WTC11 (cell line): ENCODE measurements at regions of chr10 and their contacts with region 1.

Region 1: GRCh38 chr10:72834183-72834825 is 59.2 kb upstream of the OIT3 start:
- DNase-seq: peak; percentile 19
- ATAC-seq: peak; percentile 59; the same call in 1 of the 2 replicates
- H3K4me3 Mint-ChIP-seq: no peak overlapping the region
- H3K27ac Mint-ChIP-seq: no peak overlapping the region
- H3K4me1 Mint-ChIP-seq: peaks cover 25% of the 10 kb centered on the region
- H3K27me3 Mint-ChIP-seq: no peaks in the 10 kb centered on the region
- CTCF ChIP-seq: no peak

Region 2: GRCh38 chr10:72364239-72364777 is 470.0 kb before region 1 on chr10:
- CTCF ChIA-PET with region 1: interaction called, 38 read pairs
- POLR2A ChIA-PET with region 1: no interaction called
- DNase-seq: peak; percentile 91
- ATAC-seq: peak; percentile 99
- H3K4me3 Mint-ChIP-seq: no peak overlapping the region
- H3K27ac Mint-ChIP-seq: peak overlapping the region; percentile 80; the same call in 1 of the 2 replicates
- H3K4me1 Mint-ChIP-seq: no peaks in the 10 kb centered on the region
- H3K27me3 Mint-ChIP-seq: no peaks in the 10 kb centered on the region; the same call in 1 of the 2 replicates
- CTCF ChIP-seq: peak; percentile 75

Region 3: GRCh38 chr10:72375585-72375984 is 458.7 kb before region 1 on chr10:
- CTCF ChIA-PET with region 1: interaction called, 26 read pairs
- POLR2A ChIA-PET with region 1: no interaction called
- DNase-seq: peak; percentile 50
- ATAC-seq: peak; percentile 87
- H3K4me3 Mint-ChIP-seq: no peak overlapping the region
- H3K27ac Mint-ChIP-seq: peak overlapping the region; percentile 72; the same call in 1 of the 2 replicates
- H3K4me1 Mint-ChIP-seq: peaks cover 15% of the 10 kb centered on the region
- H3K27me3 Mint-ChIP-seq: no peaks in the 10 kb centered on the region
- CTCF ChIP-seq: no peak

Region 4: DNA sequence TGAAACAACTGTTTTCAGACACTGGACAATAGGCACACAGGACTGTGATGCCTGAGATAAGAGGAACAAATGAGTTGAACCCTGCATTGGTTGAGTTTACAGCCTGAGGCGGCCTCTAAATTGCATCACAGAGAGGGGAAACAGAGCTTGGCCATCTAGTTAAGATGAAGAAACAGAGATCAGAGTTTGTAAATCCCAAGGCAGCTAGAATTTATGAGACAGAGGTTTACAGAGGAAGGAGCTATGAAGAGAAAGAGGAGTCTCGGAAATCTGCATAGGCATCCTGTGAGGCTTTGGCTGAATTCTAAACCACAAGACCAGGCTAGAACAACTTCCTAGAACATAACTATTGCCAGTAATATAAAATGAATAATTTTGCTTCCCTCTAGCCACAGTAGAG is 18.2 kb after region 1 on chr10:
- CTCF ChIA-PET with region 1: no interaction called
- POLR2A ChIA-PET with region 1: no interaction called
- DNase-seq: no peak
- ATAC-seq: no peak
- H3K4me3 Mint-ChIP-seq: no peak overlapping the region
- H3K27ac Mint-ChIP-seq: no peak overlapping the region
- H3K4me1 Mint-ChIP-seq: no peaks in the 10 kb centered on the region
- H3K27me3 Mint-ChIP-seq: no peaks in the 10 kb centered on the region
- CTCF ChIP-seq: no peak

Region 5: DNA sequence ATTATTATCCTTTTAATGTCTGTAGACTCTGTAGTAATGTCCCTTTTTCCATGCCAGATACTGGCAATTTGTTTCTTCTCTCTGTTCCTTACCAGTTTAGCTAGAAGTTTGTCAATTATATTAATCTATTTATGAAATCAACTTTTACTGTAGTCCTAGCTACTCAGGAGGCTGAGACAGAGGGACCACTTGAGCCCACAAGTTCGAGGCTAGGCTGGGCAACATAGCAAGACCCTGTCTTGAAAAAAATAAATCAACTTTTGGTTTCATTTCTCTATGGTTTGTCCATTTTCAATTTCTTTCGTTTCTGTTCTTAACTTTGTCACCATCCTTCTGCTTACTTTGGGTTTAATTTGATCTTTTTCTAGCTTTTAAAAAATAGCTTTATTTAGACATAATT is 162.8 kb after region 1 on chr10:
- CTCF ChIA-PET with region 1: no interaction called
- POLR2A ChIA-PET with region 1: no interaction called
- DNase-seq: no peak
- ATAC-seq: no peak
- H3K4me3 Mint-ChIP-seq: no peak overlapping the region
- H3K27ac Mint-ChIP-seq: no peak overlapping the region
- H3K4me1 Mint-ChIP-seq: no peaks in the 10 kb centered on the region
- H3K27me3 Mint-ChIP-seq: 0 out of 2 replicates have a peak, but pooled peaks cover 2% of the 10 kb centered on the region
- CTCF ChIP-seq: no peak

Region 6: DNA sequence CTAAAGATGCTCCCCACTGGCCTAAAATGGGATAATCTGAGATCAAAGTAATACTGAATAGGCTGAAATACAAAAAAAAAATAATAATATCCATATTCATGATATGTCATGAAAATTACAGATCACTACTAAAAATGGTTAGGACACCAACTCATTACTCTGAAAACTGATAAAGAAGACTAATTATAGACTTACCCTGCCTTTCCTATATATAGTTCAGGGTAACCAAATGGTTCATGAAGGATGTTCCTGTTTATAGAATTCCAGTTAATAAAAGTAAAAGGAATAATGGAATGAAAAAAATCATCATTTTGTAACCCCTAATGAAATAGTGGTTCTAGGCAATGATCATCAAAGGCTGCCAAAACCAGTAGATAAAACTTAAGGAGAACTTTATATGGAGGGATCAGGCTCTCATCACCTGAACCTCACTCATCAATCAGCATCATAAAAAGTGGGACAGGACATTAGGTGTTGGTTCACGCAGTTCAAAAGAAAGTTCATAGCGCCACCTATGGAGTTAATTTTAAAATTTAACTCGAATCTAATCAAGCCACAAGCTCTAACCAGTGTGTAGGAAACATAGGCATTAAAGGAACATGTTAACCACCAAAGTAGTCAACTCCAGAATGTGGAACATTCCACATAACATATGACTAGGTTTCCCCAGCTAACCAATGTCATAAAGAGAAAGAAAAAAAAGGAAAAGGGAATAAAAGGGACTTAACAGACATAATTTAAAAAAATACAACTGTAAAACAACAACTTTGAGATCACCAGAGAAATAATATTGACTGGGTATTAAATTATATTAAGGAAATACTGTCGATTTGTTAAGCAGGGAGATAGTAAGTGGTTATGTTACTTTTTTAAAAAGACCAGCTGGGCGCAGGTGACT is 226.7 kb after region 1 on chr10:
- CTCF ChIA-PET with region 1: interaction called, 10 read pairs
- POLR2A ChIA-PET with region 1: no interaction called
- DNase-seq: no peak
- ATAC-seq: peak; percentile 75
- H3K4me3 Mint-ChIP-seq: no peak overlapping the region
- H3K27ac Mint-ChIP-seq: peak overlapping the region; percentile 86; the same call in 1 of the 2 replicates
- H3K4me1 Mint-ChIP-seq: no peaks in the 10 kb centered on the region; the same call in 1 of the 2 replicates
- H3K27me3 Mint-ChIP-seq: no peaks in the 10 kb centered on the region
- CTCF ChIP-seq: no peak